Heart left ventricle (tissue), 16 donors: ENCODE measurements at regions of chr7 and their contacts with region 1.

Region 1: DNA sequence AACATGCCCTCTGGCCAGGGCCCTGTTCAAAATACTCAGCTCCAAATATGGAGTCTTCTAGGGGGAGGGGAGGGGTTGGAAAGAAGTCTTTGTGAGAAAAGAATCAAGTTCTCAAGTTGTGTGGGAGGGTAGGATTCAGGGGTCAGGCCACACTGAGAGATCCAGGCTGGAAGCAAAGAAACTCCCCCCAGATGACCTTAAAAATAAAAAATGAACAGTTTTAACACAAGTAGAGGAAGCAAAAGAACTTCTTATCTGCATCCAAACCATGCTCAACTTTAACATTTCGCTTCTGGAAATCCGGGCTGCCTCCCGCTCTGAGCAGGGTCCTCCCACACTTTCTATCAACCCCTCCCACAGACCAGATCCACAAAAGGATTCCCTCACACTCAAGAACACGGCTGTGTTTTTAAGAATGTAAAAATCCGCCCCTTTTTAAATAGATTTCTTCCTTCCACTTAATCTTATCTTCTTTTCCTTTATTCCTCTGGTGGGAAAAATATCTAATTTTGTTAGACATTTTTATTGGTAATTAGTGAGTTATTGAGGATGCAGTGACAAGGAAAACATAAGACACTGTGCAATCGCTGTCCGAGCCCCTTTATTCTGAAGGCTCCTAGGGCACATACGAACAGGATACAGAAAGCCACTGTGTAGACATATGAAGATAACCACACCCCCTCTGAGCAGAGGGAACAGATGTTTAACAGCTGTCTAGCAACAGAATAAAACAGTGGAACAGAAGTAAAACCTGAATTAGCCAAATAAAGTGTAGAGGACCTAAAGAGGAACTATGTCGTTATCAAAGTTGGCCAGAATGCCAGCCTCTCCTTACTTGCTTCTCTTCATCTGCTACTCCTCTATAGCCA is 43.8 kb downstream of the CYTH3 start:
- DNase-seq: peak in 2 of 5 donors; percentile 39 to 45
- ATAC-seq: peak; percentile 54 to 73 (median 70)
- H3K4me3 ChIP-seq: peak overlapping the region in 7 of 12 donors; percentile 6 to 32 (median 9)
- H3K27ac ChIP-seq: peak overlapping the region; percentile 40 to 78 (median 70)
- H3K4me1 ChIP-seq: peaks cover 8 to 100% (median 71%) of the 10 kb centered on the region in 12 donors
- H3K27me3 ChIP-seq: no peaks in the 10 kb centered on the region
- CTCF ChIP-seq: no peak
- POLR2A ChIP-seq: no peak

Region 2: DNA sequence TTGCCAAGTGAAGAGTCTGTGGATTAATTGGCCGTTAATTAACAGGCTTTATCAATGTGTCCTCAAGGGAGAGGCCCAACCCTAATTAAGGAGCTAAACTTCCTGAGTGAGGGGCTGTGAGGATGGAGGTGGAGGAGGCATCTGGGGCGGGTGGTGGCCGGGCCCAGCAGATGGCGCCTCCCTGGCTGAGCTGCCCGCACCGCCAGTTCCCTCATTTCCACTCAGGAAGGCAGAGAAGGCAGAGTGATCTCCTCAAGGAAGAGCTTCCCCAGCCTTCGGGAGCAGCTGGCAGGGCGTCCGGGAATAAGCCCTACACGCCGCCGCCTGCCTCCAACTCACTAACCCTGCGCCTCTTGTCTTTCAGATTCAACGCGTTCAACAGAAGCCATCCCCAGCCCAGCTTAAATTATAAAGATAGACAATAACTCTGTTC is 68.4 kb before region 1 on chr7:
- intact Hi-C with region 1: loop called in 1 of 10 experiments (anchors 5 kb)
- DNase-seq: peak in 4 of 5 donors; percentile 69 to 78 (median 73)
- ATAC-seq: peak; percentile 14 to 73 (median 61)
- H3K4me3 ChIP-seq: no peak overlapping the region
- H3K27ac ChIP-seq: peak overlapping the region in 11 of 12 donors; percentile 2 to 58 (median 47)
- H3K4me1 ChIP-seq: peaks cover 3 to 59% (median 34%) of the 10 kb centered on the region in 12 donors
- H3K27me3 ChIP-seq: no peaks in the 10 kb centered on the region
- CTCF ChIP-seq: peak; percentile 52 to 84 (median 74)
- POLR2A ChIP-seq: no peak

Region 3: GRCh38 chr7:6175645-6176044 is 53.0 kb before region 1 on chr7:
- intact Hi-C with region 1: loop called in 2 of 10 experiments (anchors 5 to 10 kb)
- DNase-seq: no peak
- ATAC-seq: no peak
- H3K4me3 ChIP-seq: no peak overlapping the region
- H3K27ac ChIP-seq: peak overlapping the region in 2 of 12 donors; percentile 41
- H3K4me1 ChIP-seq: peaks cover 7 to 67% (median 33%) of the 10 kb centered on the region in 12 donors
- H3K27me3 ChIP-seq: no peaks in the 10 kb centered on the region
- CTCF ChIP-seq: no peak
- POLR2A ChIP-seq: no peak

Region 4: DNA sequence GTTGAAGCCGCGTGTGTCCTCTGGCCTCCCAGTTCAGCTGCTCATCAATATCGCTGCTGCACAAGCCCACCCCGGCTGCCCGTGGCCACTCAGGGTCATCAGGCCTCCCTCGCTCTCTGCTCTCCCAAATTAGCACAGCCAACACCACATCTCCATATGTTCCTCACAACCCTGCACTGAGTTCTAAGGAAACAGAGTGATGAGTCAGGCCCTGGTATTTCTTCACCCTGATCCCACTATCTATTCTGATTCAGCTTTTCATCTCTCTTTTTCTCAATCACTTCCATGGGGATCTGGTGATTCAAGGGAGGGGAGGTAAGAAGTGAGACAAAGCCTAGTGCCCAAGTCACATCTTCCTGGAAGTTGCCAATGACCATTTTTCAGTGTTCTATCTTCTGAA is 20.0 kb after region 1 on chr7:
- intact Hi-C with region 1: loop called in 1 of 10 experiments (anchors 2 kb)
- DNase-seq: no peak
- ATAC-seq: peak in 3 of 4 donors; percentile 4 to 74 (median 72)
- H3K4me3 ChIP-seq: no peak overlapping the region
- H3K27ac ChIP-seq: peak overlapping the region in 3 of 12 donors; percentile 10 to 29 (median 20)
- H3K4me1 ChIP-seq: peaks cover 3 to 85% (median 52%) of the 10 kb centered on the region in 12 donors
- H3K27me3 ChIP-seq: no peaks in the 10 kb centered on the region
- CTCF ChIP-seq: no peak
- POLR2A ChIP-seq: no peak

Region 5: GRCh38 chr7:6260291-6261187 is 31.9 kb after region 1 on chr7:
- intact Hi-C with region 1: loop called in 4 of 10 experiments (anchors 5 kb)
- DNase-seq: peak in 2 of 5 donors; percentile 34 to 46
- ATAC-seq: peak in 2 of 4 donors; percentile 27 to 28
- H3K4me3 ChIP-seq: no peak overlapping the region
- H3K27ac ChIP-seq: peak overlapping the region; percentile 41 to 83 (median 70)
- H3K4me1 ChIP-seq: peaks cover 10 to 86% (median 68%) of the 10 kb centered on the region in 12 donors
- H3K27me3 ChIP-seq: no peaks in the 10 kb centered on the region
- CTCF ChIP-seq: no peak
- POLR2A ChIP-seq: no peak